Activated T-helper 1 cell treated with anti-CD3 and anti-CD28 coated beads, Interleukin-12 subunit alpha, Interleukin-12 subunit beta, Interleukin-2, Interleukin-4 antibody, amounts not matched to agents 30 ng/mL and 10 ng/mL and 1 ng/mL, durations not matched to agents 14 hours and 24 hours and 36 hours (primary cell): ENCODE measurements at regions of chr20 and their contacts with region 1.

Region 1: GRCh38 chr20:54475334-54476168 is at the start of gene DOK5:
- DNase-seq: no peak
- H3K4me3 Mint-ChIP-seq: peak within 1 kb of the TSS; percentile 83
- H3K27ac Mint-ChIP-seq: peak within 1 kb of the TSS; percentile 46
- H3K4me1 Mint-ChIP-seq: peaks cover 19% of the 10 kb centered on the region
- H3K27me3 Mint-ChIP-seq: peaks cover 23% of the 10 kb centered on the region
- total RNA-seq, gene DOK5: 25.2 and 27.7 TPM in 2 replicates

Region 2: DNA sequence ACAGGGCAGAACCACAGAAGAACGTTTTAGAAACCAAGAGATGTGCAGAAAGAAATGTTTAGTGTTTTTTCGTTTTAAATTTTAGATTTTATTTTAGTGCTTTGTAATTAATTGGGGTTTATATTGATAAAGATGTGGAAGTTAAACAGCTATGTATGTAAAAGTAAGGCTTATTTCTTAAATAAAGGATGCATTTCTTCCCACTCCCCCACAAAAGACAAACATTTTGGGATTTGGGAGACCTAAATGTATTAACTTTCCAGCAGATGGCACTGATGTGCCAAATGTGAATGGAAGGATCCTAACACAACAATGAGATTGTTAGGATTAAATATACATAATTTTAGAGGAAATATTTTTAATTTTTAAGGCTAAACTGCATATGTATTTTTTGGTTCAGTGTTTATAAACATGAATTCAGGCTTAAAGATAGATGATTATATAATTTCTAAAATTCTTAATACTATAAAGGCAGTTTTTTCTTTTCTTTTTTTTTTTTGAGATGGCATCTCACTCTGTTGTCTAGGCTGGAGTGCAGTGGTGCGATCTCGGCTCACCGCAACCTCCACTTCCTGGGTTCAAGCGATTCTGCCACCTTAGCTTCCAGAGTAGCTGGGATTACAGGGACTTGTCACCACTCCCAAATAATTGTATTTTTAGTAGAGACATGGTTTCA is 255.7 kb before region 1 on chr20:
- intact Hi-C with region 1: loop called (anchors 2 kb)
- DNase-seq: no peak
- H3K4me3 Mint-ChIP-seq: no peak overlapping the region
- H3K27ac Mint-ChIP-seq: no peak overlapping the region
- H3K4me1 Mint-ChIP-seq: peaks cover 22% of the 10 kb centered on the region
- H3K27me3 Mint-ChIP-seq: no peaks in the 10 kb centered on the region

Region 3: DNA sequence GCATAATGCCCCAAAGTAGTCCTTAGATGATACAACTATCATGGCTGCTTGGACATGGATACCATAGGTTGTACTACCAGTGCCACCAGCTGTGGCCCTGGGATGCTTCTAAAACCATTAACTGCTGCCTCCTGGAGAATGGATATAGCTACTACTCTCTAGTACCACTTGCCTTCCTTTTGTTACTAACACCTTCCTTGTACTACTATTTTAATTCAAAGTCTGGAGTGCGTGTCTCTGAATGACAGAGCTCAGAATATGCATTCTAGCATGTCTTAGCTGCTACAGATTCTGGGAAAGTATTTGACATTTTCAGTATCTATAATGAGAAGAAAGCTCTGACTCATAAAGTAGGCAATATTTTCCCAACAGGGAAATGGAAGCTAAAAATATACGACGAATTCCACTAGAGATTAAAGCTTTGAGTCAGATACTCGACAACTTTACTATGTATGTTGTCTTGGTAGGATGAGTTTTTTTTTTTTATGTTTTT is 155.4 kb before region 1 on chr20:
- intact Hi-C with region 1: loop called (anchors 1 kb)
- DNase-seq: no peak
- H3K4me3 Mint-ChIP-seq: no peak overlapping the region
- H3K27ac Mint-ChIP-seq: peak overlapping the region; percentile 67
- H3K4me1 Mint-ChIP-seq: peaks cover 40% of the 10 kb centered on the region
- H3K27me3 Mint-ChIP-seq: no peaks in the 10 kb centered on the region

Region 4: DNA sequence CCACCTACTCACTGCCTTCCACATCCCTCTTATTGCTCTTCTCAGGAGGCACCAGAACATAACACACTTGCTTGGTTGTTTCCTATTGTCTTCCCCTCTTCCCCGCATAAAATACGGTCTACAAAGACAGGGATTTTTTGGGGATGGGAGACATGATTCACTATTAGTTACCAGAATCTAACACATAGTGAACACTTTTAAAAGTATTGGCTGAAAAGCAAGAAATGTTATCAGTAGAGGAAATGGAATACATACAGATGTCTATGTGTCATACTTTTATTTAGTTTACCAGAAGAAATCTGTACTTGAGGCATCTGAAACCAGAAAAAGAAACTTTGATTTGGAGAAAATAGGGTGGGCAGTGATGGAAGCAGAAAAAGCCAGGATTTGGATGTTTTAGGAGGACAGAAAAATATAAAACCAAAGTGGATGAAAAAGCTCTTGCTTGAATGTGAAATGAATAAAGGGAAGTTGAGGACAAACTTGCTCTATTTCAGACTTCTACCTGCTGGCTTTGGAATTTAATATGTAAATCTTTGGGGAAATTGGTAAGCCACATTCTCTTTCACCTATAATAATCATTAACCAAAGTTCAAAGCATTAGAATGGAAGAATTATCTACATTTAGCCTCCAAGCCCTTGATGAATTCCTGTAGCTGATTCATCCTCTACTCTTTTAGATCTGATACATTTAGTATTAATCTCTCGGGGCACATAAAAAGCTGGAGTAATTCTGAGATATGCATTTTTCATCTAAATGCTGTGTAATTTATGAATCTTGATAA is 82.4 kb after region 1 on chr20:
- intact Hi-C with region 1: loop called (anchors 5 kb)
- DNase-seq: no peak
- H3K4me3 Mint-ChIP-seq: no peak overlapping the region
- H3K27ac Mint-ChIP-seq: no peak overlapping the region
- H3K4me1 Mint-ChIP-seq: no peaks in the 10 kb centered on the region
- H3K27me3 Mint-ChIP-seq: peaks cover 1% of the 10 kb centered on the region

Region 5: GRCh38 chr20:54573838-54574237 is 98.3 kb after region 1 on chr20:
- intact Hi-C with region 1: no loop called
- DNase-seq: no peak
- H3K4me3 Mint-ChIP-seq: no peak overlapping the region
- H3K27ac Mint-ChIP-seq: no peak overlapping the region
- H3K4me1 Mint-ChIP-seq: no peaks in the 10 kb centered on the region
- H3K27me3 Mint-ChIP-seq: no peaks in the 10 kb centered on the region